Activated CD8-positive, alpha-beta T cell treated with anti-CD3 and anti-CD28 coated beads for 36 hours (primary cell): ENCODE measurements at regions of chr12 and their contacts with region 1.

Region 1: GRCh38 chr12:67006610-67007009 is 262.5 kb upstream of the CAND1 start:
- DNase-seq: no peak
- ATAC-seq: no peak
- H3K4me3 Mint-ChIP-seq: no peak overlapping the region
- H3K27ac Mint-ChIP-seq: no peak overlapping the region
- H3K4me1 Mint-ChIP-seq: no peaks in the 10 kb centered on the region
- H3K27me3 Mint-ChIP-seq: peaks cover 4% of the 10 kb centered on the region
- CTCF ChIP-seq: no peak

Region 2: DNA sequence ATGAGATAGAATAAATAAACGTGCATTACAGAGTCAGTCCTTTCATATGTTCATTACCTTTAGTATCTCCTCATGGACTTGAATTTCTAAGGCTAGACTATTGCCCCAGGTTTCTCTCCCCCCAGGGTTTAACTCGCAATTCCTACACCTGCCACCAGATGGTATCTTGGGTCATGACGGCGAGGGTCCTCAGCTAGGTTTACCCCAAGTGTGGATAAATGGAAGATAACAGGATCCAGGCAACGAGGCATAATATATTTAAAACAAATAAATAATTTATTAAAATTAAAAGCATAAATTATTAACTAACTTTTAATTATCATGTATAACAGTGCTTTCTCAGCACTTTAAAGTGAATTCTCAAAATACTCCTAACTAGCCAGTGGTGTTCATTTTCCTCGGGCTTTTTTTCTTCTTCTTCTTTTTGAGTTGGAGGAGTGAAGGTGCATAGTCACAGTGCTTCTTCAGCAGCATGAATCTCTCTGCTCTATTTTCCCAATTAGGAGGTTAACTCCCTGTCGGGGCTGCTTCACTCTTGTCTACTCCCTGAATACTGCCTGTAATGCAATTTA is 19.0 kb after region 1 on chr12:
- CTCF ChIA-PET with region 1: interaction called, 11 read pairs
- POLR2A ChIA-PET with region 1: no interaction called
- intact Hi-C with region 1: no loop called
- DNase-seq: peak; percentile 62
- ATAC-seq: peak; percentile 61
- H3K4me3 Mint-ChIP-seq: no peak overlapping the region
- H3K27ac Mint-ChIP-seq: no peak overlapping the region
- H3K4me1 Mint-ChIP-seq: no peaks in the 10 kb centered on the region
- H3K27me3 Mint-ChIP-seq: peaks cover 10% of the 10 kb centered on the region
- CTCF ChIP-seq: peak; percentile 90